ENCODE measurements at regions of chr7 and their contacts with region 1.

Region 1: GRCh38 chr7:12067141-12067831 is 143.8 kb upstream of the TMEM106B start:
- DNase-seq: peak; percentile 75
- H3K4me3 Mint-ChIP-seq: no peak overlapping the region
- H3K27ac Mint-ChIP-seq: no peak overlapping the region
- H3K4me1 Mint-ChIP-seq: peaks cover 12% of the 10 kb centered on the region
- H3K27me3 Mint-ChIP-seq: no peaks in the 10 kb centered on the region
- CTCF ChIP-seq: peak; percentile 59

Region 2: DNA sequence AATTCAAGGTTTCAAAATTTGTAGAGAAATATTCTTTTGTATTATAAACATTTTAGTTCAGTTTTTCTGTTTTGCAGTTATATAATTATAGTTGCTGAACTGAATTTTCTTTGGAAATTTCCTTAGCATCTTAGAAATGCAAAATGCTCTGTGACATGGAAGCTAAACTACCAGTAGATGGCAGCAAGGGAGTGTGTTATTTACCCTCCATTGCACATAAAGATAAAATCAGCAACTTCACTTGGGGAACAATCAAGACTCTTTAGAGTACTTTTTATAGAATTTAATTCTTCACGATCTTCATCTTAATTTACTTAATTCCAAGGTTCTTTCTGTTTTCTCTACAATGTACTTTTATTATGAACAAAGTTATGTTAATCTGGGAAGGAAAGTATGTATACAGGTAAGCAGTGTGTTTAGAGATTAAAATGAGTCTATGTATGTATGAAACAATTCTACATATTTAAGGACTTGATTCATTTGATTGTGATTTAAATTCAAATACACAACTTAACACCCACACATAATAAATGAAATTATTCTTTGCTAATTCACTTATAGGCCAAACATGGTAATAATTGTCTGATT is 639.5 kb before region 1 on chr7:
- CTCF ChIA-PET with region 1: no interaction called
- POLR2A ChIA-PET with region 1: no interaction called
- intact Hi-C with region 1: loop called (anchors 1 kb)
- DNase-seq: peak; percentile 67
- H3K4me3 Mint-ChIP-seq: no peak overlapping the region
- H3K27ac Mint-ChIP-seq: no peak overlapping the region
- H3K4me1 Mint-ChIP-seq: no peaks in the 10 kb centered on the region
- H3K27me3 Mint-ChIP-seq: no peaks in the 10 kb centered on the region
- CTCF ChIP-seq: peak; percentile 59

Region 3: GRCh38 chr7:12152196-12152918 is 85.1 kb after region 1 on chr7:
- CTCF ChIA-PET with region 1: no interaction called
- POLR2A ChIA-PET with region 1: no interaction called
- intact Hi-C with region 1: no loop called
- DNase-seq: no peak
- H3K4me3 Mint-ChIP-seq: no peak overlapping the region
- H3K27ac Mint-ChIP-seq: no peak overlapping the region
- H3K4me1 Mint-ChIP-seq: no peaks in the 10 kb centered on the region
- H3K27me3 Mint-ChIP-seq: peaks cover 34% of the 10 kb centered on the region
- CTCF ChIP-seq: no peak